MCF 10A (cell line): ENCODE measurements at regions of chr9 and their contacts with region 1.

Region 1: GRCh38 chr9:89388084-89388867 is 70.0 kb downstream of the SECISBP2 start:
- DNase-seq: peak; percentile 94
- H3K4me3 Mint-ChIP-seq: no peak overlapping the region
- H3K27ac Mint-ChIP-seq: peak overlapping the region; percentile 54
- H3K4me1 Mint-ChIP-seq: peaks cover 4% of the 10 kb centered on the region
- H3K27me3 Mint-ChIP-seq: no peaks in the 10 kb centered on the region
- CTCF ChIP-seq: no peak

Region 2: DNA sequence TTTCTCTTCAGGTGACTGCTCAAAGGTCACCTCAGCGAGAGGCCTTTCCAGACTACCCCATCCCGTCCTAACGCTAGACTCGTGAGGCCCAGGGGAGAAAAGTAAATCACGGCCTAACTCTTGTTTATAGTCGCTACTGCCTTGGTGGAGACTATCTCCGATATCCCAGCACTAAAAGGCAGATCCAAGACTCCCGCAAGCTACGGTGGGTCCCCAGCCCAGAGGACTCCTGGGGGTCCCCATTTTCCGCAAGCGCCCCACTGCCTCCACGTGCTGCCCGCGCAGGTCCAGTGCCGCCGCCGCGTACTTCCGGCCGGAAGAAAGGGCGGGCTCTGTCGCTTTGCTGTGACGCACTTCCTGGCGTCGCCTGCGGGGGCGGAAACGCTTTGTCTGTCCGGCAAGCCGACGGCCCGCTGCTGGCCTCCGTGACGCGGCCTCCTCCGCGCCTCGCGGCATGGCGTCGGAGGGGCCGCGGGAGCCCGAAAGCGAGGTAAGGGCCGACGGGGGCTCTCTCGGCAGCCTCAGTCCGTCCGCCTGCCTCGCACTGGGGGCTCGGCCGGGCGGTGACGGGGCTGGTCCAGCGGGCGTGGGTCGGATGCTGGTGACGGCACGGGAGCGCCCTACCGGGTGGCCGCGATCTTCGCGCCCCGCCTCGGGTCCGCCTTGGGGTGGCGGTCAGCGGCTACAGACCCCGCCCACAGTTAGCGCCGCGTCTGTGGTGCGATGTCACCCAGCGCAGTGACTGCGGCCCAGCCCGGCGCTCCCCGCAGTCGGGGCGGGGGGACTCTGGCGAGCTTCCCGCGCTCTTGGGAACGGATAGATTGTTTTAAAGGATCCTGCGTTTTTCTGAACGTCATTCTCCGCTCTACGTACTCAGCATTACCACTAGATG is 69.9 kb before region 1 on chr9 and contains the start of gene SECISBP2:
- CTCF ChIA-PET with region 1: no interaction called
- POLR2A ChIA-PET with region 1: interaction called, 6 read pairs
- intact Hi-C with region 1: loop called (anchors 1 kb)
- DNase-seq: peak; percentile 96
- H3K4me3 Mint-ChIP-seq: peak within 1 kb of the TSS; percentile 88
- H3K27ac Mint-ChIP-seq: peak within 1 kb of the TSS; percentile 97
- H3K4me1 Mint-ChIP-seq: peaks cover 36% of the 10 kb centered on the region
- H3K27me3 Mint-ChIP-seq: no peaks in the 10 kb centered on the region
- CTCF ChIP-seq: no peak
- total RNA-seq, gene SECISBP2: 36.4 and 38.9 TPM in 2 replicates

Region 3: DNA sequence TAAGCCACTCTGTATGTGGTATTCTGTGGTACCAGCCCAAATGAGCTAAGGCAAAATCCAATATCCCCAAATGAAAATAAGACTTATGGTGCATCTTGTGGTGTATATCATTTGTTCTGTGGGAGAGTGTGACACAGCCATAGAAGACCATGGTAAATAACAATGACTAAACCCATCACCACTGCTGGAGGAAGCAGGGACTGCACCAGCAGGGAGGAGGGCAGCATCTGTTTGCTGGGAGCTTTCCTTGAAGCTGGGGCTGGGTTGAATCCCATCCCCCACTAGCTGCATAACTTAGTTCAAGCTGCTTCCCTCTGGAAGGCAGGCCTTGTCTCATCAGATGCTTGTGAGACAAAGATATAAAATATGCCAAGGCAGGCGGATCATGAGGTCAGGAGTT is 230.7 kb after region 1 on chr9:
- CTCF ChIA-PET with region 1: no interaction called
- POLR2A ChIA-PET with region 1: no interaction called
- intact Hi-C with region 1: no loop called
- DNase-seq: no peak
- H3K4me3 Mint-ChIP-seq: no peak overlapping the region
- H3K27ac Mint-ChIP-seq: no peak overlapping the region
- H3K4me1 Mint-ChIP-seq: no peaks in the 10 kb centered on the region
- H3K27me3 Mint-ChIP-seq: no peaks in the 10 kb centered on the region
- CTCF ChIP-seq: no peak